RWPE1 (cell line): ENCODE measurements at regions of chr20 and their contacts with region 1.

Region 1: DNA sequence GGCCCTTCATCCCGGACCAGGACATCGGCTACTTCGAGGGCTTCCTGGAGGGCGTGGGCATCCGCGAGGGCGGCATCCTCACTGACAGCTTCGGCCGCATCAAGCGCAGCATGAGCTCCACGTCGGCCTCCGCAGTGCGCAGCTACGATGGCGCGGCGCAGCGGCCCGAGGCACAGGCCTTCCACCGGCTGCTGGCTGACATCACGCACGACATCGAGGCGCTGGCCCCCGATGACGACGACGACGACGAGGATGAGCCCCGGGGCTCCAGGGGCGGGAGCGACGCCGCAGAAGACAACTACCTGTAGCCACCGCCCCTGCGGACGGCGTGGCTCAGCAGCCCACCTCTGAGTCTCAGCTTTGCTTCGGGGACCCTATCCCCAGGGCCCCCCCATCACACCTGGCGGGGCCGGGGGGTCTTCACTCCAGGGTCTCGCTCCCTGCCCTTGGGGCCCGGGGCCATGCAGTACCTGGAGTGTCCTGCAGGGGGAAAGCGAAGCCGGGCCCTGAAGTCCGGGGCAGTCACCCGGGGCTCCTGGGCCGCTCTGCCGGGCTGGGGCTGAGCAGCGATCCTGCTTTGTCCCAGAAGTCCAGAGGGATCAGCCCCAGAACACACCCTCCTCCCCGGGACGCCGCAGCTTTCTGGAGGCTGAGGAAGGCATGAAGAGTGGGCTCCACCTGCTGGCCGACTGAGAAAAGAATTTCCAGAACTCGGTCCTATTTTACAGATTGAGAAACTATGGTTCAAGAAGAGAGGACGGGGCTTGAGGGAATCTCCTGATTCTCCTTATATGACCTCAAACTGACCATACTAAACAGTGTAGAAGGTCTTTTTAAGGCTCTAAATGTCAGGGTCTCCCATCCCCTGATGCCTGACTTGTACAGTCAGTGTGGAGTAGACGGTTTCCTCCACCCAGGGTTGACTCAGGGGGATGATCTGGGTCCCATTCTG is 20.8 kb upstream of the HCK start:
- DNase-seq: peak; percentile 94
- H3K27ac ChIP-seq: no peak overlapping the region
- CTCF ChIP-seq: peak; percentile 100

Region 2: GRCh38 chr20:31849455-31849925 is 181.8 kb before region 1 on chr20:
- CTCF ChIA-PET with region 1: interaction called, 69 read pairs
- POLR2A ChIA-PET with region 1: no interaction called
- DNase-seq: no peak
- H3K27ac ChIP-seq: no peak overlapping the region
- CTCF ChIP-seq: no peak

Region 3: GRCh38 chr20:32012159-32012688 is 19.1 kb before region 1 on chr20:
- CTCF ChIA-PET with region 1: interaction called, 29 read pairs
- POLR2A ChIA-PET with region 1: no interaction called
- DNase-seq: no peak
- H3K27ac ChIP-seq: no peak overlapping the region
- CTCF ChIP-seq: no peak

Region 4: DNA sequence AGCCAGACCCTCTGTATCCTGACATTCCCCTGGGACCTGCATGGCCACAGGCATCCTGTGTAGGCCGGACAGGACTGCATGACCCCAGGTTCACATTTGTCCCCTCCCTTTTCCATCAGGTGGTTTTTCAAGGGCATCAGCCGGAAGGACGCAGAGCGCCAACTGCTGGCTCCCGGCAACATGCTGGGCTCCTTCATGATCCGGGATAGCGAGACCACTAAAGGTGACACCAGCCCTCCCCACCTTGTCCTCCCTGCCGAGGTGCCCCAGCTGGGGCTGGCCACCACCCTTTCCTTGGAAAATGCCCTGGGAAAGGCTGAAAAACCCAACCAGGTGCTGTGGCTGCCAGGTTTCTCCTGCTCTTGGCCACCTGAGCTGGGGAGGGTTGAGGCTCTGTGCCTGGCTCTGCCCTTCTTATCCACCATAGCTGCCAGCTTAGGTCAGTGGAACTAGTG is 48.4 kb after region 1 on chr20:
- CTCF ChIA-PET with region 1: interaction called, 13 read pairs
- POLR2A ChIA-PET with region 1: no interaction called
- DNase-seq: no peak
- H3K27ac ChIP-seq: no peak overlapping the region
- CTCF ChIP-seq: no peak

Region 5: DNA sequence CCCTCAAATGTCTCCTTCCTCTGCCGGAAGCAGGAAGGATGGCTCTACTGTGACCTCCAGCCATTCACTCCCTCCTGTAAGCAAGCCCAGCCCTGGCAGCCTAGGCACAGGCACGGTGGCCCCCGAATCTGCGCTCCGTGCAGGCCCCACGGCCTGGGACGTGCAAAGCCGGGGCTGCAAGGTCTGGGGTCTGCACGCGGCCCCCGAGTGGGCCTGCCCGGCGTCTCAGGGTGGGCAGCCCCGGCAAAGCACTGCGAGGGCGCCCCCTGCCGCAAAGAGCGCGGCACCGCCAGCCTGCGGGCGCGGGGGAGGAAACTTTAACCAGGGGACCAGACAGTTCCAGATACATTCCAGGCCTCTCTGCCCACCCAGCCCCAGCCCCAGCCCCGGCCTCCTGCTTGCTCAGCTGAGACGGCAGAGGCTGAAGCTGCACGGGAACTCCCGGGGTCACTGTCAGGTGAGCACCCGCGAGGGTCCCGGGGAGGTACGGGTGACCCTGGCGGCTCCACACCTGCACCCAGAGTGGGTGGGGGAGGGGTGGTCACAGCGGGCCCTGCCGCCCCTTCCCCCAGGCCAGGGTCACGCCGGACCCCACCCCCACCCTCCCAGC is 425.7 kb after region 1 on chr20:
- CTCF ChIA-PET with region 1: no interaction called
- POLR2A ChIA-PET with region 1: no interaction called
- DNase-seq: peak; percentile 55
- H3K27ac ChIP-seq: no peak overlapping the region
- CTCF ChIP-seq: peak; percentile 91